HCT116 (cell line): ENCODE measurements at regions of chr3 and their contacts with region 1.

Region 1: DNA sequence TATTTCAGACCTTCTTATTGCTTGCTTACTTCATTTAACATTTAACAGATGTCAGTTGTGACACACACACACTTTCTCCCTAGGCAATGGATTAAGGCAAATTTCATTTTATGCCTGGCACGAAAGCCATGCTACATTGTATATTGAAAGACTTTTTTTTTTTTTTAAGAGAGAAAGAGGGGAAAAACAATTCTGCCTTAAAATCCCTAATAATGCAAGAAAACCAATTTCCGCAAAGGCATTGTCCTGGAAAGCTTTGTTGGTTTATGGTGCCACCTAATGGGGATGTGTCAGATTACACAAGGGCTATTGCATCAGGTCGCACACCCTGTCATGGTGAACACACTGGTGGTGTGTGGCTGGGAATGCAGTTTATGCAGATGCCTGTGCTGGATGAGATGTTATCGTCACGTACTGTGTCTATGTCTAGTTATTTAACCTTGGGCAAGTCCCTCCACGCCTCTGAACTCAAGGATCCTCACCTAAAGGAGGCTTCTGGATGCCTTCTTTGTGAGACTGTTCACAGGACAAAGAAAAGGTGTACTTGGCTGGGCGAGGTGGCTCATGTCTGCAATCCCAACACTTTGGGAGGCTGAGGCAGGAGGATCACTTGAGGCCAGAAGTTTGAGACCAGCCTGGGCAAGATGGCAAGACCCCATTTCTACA is 37.3 kb upstream of the RFTN1 start:
- DNase-seq: peak; percentile 79
- ATAC-seq: peak; percentile 98
- H3K4me3 ChIP-seq: no peak overlapping the region
- H3K27ac ChIP-seq: no peak overlapping the region
- H3K4me1 ChIP-seq: peaks cover 0 to 3% of the 10 kb centered on the region in 2 experiments; a peak in 1 of 4 replicates
- H3K27me3 ChIP-seq: no peaks in the 10 kb centered on the region; the same call in 1 of the 2 replicates
- CTCF ChIP-seq: peak; percentile 75 to 86 (median 86)
- POLR2A ChIP-seq: no peak
- RAD21 ChIP-seq: peak; percentile 97

Region 2: GRCh38 chr3:15820911-15821310 is 729.9 kb before region 1 on chr3:
- CTCF ChIA-PET with region 1: no interaction called
- POLR2A ChIA-PET with region 1: no interaction called
- RAD21 ChIA-PET with region 1: no interaction called
- intact Hi-C with region 1: loop called (anchors 10 kb)
- DNase-seq: no peak
- ATAC-seq: no peak
- H3K4me3 ChIP-seq: no peak overlapping the region
- H3K27ac ChIP-seq: no peak overlapping the region
- H3K4me1 ChIP-seq: peaks cover 0 to 3% of the 10 kb centered on the region in 2 experiments; a peak in 1 of 4 replicates
- H3K27me3 ChIP-seq: no peaks in the 10 kb centered on the region
- CTCF ChIP-seq: no peak
- POLR2A ChIP-seq: no peak
- RAD21 ChIP-seq: no peak

Region 3: GRCh38 chr3:16177962-16178627 is 372.7 kb before region 1 on chr3:
- CTCF ChIA-PET with region 1: no interaction called
- POLR2A ChIA-PET with region 1: no interaction called
- RAD21 ChIA-PET with region 1: interaction called in 1 of 2 experiments, 3 read pairs
- intact Hi-C with region 1: loop called (anchors 2 kb)
- DNase-seq: peak; percentile 38
- ATAC-seq: peak; percentile 97
- H3K4me3 ChIP-seq: no peak overlapping the region
- H3K27ac ChIP-seq: no peak overlapping the region
- H3K4me1 ChIP-seq: peaks cover 0 to 9% of the 10 kb centered on the region in 2 experiments; a peak in 1 of 4 replicates
- H3K27me3 ChIP-seq: no peaks in the 10 kb centered on the region
- CTCF ChIP-seq: peak; percentile 88 to 98 (median 96)
- POLR2A ChIP-seq: no peak
- RAD21 ChIP-seq: peak; percentile 98

Region 4: DNA sequence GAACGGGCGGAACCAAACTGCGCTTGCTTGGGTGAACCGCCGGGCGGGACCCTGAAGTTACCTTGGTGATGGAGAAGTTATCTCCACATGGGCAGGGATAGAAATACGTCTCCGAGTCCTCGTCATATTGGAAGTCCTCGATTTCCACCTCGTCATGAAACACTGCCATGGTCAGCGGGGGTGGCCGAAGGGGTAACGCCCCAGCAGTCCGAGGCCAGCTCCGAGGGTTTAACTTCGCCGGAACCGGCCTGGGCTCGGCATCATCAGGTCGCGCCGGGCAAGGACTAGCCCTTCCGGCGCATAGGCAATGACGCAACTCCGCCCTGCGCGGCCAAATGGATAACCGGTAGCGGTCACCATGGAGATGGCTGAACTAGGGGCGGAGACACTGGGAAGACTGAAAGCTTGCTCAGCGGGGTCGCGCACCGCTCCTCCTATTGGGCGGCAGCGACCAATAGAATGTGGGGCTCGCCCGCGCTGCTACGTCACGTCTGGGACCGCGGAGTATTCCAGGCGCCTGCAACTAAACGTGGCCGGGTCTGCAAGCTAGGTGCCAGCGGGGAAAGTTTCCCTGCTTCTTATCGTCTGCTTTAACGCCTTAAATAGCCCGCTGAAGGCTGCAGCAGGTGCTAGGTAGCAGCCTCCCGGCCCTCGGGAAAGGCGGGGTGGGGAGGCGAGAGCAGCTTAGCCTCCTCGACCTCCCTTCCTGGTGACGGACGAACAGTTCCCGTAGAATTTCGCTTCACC is 285.9 kb before region 1 on chr3 and contains the starts of genes DPH3 and OXNAD1:
- CTCF ChIA-PET with region 1: interaction called, 4 read pairs
- POLR2A ChIA-PET with region 1: no interaction called
- RAD21 ChIA-PET with region 1: no interaction called
- intact Hi-C with region 1: loop called (anchors 1 kb)
- DNase-seq: peak; percentile 99
- ATAC-seq: peak; percentile 98
- H3K4me3 ChIP-seq: peak within 1 kb of the TSS; percentile 93 to 95
- H3K27ac ChIP-seq: peak within 1 kb of the TSS; percentile 52
- H3K4me1 ChIP-seq: peaks cover 6 to 8% of the 10 kb centered on the region in 2 experiments; a peak in 3 of 4 replicates
- H3K27me3 ChIP-seq: no peaks in the 10 kb centered on the region
- CTCF ChIP-seq: no peak
- POLR2A ChIP-seq: peak; percentile 82
- RAD21 ChIP-seq: no peak
- total RNA-seq, gene DPH3: 13.8 TPM
- total RNA-seq, gene OXNAD1: 12.1 TPM

Region 5: DNA sequence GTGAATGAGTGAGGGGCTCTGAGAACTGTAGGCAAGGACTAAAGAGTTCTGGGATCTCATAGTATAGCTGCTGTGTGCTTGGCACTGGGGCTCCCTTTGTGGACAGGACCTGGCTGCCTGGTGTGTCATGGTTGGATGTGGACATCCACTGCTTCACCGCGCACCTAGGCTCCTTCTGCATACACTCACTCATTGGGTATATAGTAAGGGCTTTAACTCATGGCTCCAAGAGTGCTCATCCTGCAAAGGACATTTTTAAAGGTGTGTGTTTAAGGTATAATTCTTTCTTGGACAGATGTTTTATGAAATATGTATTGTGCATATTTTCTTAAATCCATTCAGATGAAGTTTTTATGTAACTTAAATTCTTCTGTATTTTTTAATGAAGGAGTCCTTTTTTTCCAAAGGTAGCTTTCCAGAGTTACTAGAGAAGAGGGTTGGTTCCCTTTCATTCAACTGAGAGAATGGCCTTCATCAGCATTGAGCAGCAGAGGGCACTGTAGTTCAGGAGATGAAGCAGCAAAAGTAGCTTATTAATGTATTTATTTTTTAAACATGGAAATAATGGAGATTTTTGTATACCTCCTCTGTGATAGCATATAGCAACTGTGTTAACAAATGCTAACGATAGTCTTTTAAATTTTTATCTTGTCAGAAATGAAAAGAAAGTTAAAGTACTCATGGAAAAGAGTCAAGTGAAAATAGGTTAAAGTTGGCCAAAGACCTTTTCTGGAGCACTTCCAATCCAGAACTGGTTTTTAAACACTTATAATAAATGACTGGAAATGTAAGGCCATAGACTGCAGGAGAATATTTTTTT is 260.6 kb before region 1 on chr3:
- CTCF ChIA-PET with region 1: interaction called, 38 read pairs
- POLR2A ChIA-PET with region 1: interaction called, 3 read pairs
- RAD21 ChIA-PET with region 1: interaction called in 1 of 2 experiments, 9 read pairs
- intact Hi-C with region 1: loop called (anchors 1 kb)
- DNase-seq: peak; percentile 24
- ATAC-seq: peak; percentile 75
- H3K4me3 ChIP-seq: no peak overlapping the region
- H3K27ac ChIP-seq: no peak overlapping the region
- H3K4me1 ChIP-seq: no peaks in the 10 kb centered on the region
- H3K27me3 ChIP-seq: no peaks in the 10 kb centered on the region
- CTCF ChIP-seq: peak; percentile 66 to 74 (median 72); a peak in 5 of 6 replicates
- POLR2A ChIP-seq: no peak
- RAD21 ChIP-seq: peak; percentile 87

Region 6: DNA sequence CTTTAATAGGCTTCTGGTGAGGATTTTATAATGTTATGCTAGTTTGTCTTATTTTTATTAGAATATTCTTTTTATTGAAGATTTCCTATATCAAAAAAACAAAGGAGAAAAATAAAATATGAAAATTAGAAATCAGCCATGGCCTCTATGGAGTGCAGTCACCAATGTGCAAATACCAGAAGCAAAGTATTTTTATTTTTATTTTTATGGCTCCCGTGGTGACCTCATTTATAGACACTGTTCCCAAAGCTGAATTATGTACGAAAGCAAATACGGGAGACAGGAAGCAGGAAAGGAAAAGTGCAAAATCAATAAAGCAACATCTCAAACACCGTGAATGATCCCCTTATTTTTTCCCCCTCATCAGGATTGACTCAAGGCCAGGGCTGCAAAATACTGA is 19.3 kb after region 1 on chr3:
- CTCF ChIA-PET with region 1: no interaction called
- POLR2A ChIA-PET with region 1: no interaction called
- RAD21 ChIA-PET with region 1: no interaction called
- intact Hi-C with region 1: no loop called
- DNase-seq: no peak
- ATAC-seq: no peak
- H3K4me3 ChIP-seq: no peak overlapping the region
- H3K27ac ChIP-seq: no peak overlapping the region
- H3K4me1 ChIP-seq: no peaks in the 10 kb centered on the region
- H3K27me3 ChIP-seq: no peaks in the 10 kb centered on the region
- CTCF ChIP-seq: no peak
- POLR2A ChIP-seq: no peak
- RAD21 ChIP-seq: no peak